HEK293T (cell line): ENCODE measurements at regions of chr7 and their contacts with region 1.

Region 1: GRCh38 chr7:25125137-25125946 is at the start of gene CYCS:
- DNase-seq: peak; percentile 94

Region 2: GRCh38 chr7:25009257-25009656 is 116.1 kb before region 1 on chr7:
- CTCF ChIA-PET with region 1: no interaction called
- POLR2A ChIA-PET with region 1: no interaction called
- DNase-seq: no peak

Region 3: GRCh38 chr7:25139536-25139935 is 14.2 kb after region 1 on chr7:
- CTCF ChIA-PET with region 1: interaction called, 3 read pairs
- POLR2A ChIA-PET with region 1: interaction called, 16 read pairs
- DNase-seq: no peak